Left colon (tissue), 2 donors: ENCODE measurements at regions of chr7 and their contacts with region 1.

Region 1: GRCh38 chr7:44240983-44241510 is 40.3 kb downstream of the YKT6 start:
- DNase-seq: peak; percentile 69 to 73
- ATAC-seq: peak; percentile 98

Region 2: DNA sequence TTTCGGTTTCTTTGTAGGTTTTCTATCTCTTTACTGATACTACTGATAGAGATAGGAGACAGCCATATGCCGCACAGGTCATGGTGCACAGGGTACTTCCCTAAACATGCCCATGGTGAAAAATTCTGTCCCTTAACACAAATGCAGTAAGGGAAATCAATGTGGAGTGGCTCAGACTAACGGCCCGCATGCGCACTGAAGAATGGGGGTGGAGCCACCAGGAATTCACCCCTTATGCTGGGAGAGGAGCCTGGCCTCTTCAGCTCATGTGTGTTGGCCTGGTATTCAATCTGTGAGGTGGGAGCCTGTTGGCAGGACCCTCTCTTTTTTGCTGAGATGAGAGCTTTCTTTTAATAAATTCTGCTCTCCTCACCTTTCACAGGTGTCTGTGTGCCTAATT is 326.3 kb before region 1 on chr7:
- intact Hi-C with region 1: no loop called
- DNase-seq: no peak
- ATAC-seq: no peak

Region 3: GRCh38 chr7:44477063-44477830 is 236.2 kb after region 1 on chr7:
- intact Hi-C with region 1: loop called in 1 of 2 experiments (anchors 5 kb)
- DNase-seq: peak in 1 of 2 donors; percentile 46
- ATAC-seq: peak; percentile 85

Region 4: DNA sequence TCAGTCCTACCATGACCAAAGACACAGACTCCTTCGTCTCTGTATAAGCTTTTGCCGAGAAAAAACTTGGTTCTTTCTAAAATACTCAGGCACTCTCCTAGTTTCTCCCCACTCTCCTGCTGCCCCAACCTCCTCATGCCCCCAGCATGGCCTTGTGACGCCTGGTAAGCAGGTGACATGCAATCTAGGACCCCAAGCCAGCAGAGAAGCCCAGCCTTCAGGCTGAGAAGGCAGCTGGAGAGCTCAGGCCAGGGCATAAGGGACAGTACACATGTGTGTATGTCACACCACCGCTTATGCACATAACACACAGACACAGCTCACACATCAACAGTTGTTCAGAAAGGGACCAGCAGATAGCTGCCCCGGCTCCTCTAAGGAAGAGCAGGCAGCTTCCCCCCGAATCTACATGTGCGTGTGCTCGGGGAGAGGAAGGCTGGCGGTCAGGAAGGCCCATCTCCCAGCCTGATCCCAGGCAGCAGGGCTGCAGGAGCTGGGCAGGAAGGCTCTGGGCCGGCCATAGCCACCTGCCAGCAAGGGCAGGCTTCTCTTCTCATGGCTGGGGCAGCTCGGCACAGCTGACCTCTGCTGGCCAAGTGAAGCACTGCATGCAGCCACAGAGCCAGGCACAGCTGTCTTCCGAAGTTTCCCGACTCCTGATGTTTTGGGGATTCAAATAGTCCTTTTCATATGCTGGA is 324.2 kb after region 1 on chr7:
- intact Hi-C with region 1: loop called in 1 of 2 experiments (anchors 10 kb)
- DNase-seq: peak; percentile 36 to 76
- ATAC-seq: peak; percentile 83